SK-N-SH (cell line): ENCODE measurements at regions of chr5 and their contacts with region 1.

Region 1: DNA sequence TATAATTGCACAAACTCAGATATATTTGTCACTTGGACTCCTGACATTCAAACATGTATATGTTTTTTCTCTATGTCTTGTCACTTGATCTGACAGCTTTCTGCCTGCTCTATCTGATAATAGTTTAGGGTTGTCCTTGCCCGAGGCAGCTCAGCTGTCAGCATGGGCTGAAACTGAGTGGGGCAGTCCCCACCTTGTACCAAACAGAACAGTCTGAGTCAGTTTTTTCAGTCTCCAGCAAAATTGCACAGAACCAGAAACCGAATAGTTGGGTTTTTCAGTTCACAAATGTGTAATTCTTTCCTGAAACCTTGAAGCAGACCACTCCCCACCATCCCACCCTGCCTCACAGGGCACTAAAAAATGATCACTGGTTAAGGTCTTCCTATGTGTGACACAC is 9.5 kb upstream of the HAND1 start:
- DNase-seq: peak; percentile 81
- H3K4me3 ChIP-seq: no peak overlapping the region
- H3K27ac ChIP-seq: peak overlapping the region in 1 of 2 experiments; percentile 100; a peak in 2 of 4 replicates
- H3K4me1 ChIP-seq: peaks cover 0 to 50% of the 10 kb centered on the region in 2 experiments; a peak in 2 of 4 replicates
- H3K27me3 ChIP-seq: peaks cover 50% of the 10 kb centered on the region
- CTCF ChIP-seq: no peak
- EP300 ChIP-seq: peak in 1 of 2 experiments; percentile 99; a peak in 2 of 4 replicates
- RAD21 ChIP-seq: peak; percentile 33; the same call in 1 of the 2 replicates

Region 2: DNA sequence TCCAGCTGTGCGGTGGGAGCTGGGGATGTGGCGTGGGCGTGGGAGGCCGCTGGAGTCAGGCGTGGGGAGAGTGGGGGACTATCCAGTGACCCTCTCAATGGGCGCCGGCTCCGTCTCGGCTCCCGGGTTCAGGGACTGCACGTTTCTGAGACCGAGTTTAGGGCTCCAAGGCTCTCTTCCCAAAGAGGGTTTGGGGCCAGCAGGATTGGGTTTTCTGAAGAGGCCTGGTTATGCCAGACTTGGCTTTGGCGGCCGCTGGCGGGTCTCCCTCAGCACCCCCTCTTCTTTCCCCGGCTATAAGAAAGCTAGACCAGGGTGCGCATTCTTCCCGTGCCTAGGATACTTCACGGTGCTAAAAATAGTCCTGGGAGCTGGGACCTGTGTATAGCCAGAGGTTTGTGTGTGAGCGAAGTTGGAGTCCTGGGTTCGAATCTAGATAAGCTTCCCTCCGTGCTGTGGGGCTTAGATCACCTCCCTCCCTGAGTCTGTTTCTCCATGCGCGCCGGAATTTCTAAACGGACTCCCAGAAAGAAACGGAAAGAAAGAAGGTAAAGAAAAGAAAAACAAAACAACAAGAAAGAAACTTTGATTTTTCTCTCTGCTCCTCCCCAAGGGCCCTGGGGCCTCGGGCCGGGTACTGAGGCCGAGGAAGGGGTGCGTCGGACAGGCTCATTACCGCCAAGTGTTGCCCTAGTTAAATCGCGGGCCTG is 14.5 kb before region 1 on chr5:
- CTCF ChIA-PET with region 1: interaction called, 11 read pairs
- POLR2A ChIA-PET with region 1: interaction called, 59 read pairs
- DNase-seq: no peak
- H3K4me3 ChIP-seq: peak overlapping the region in 1 of 2 experiments; percentile 74; a peak in 1 of 4 replicates
- H3K27ac ChIP-seq: peak overlapping the region in 1 of 2 experiments; percentile 96; a peak in 2 of 4 replicates
- H3K4me1 ChIP-seq: peaks cover 0 to 41% of the 10 kb centered on the region in 2 experiments; a peak in 2 of 4 replicates
- H3K27me3 ChIP-seq: peaks cover 45% of the 10 kb centered on the region
- CTCF ChIP-seq: no peak
- EP300 ChIP-seq: no peak
- RAD21 ChIP-seq: no peak